WTC11 (cell line): ENCODE measurements at regions of chr19 and their contacts with region 1.

Region 1: GRCh38 chr19:40603389-40604135 is 2.4 kb downstream of the LTBP4 start:
- DNase-seq: peak; percentile 100
- ATAC-seq: peak; percentile 79
- H3K4me3 Mint-ChIP-seq: peak overlapping the region; percentile 77
- H3K27ac Mint-ChIP-seq: peak overlapping the region; percentile 78
- H3K4me1 Mint-ChIP-seq: peaks cover 52% of the 10 kb centered on the region
- H3K27me3 Mint-ChIP-seq: peaks cover 90% of the 10 kb centered on the region
- CTCF ChIP-seq: no peak

Region 2: DNA sequence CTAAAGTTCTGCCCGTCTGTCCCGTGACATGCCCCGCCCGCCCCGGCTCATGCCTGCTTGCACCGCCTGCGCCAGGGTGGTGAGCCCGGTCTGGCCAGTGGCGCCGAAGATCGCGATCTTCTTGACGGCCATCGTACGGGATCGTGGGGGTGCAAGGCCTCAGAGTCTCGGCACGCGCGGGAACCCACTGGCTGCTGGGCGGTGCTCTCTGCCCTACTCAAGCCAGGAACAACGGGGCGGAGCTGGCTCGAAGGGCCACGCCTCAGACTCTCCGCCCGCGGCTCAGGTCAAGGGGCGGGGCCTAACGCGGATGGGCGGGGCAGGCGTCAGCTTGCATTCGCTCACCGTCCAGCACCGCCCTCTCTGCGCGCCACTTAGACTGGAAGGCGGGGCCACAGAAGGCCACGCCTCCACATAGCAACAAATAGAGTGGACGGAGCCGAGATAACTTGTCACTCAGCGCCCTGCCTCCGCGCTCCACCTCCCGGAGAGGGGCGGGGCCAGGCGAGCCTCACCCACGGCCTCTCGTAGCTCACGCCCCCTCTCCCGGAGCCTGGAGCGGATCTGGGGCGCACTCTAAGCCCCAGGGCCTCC is 137.9 kb before region 1 on chr19 and contains the start of gene BLVRB:
- CTCF ChIA-PET with region 1: interaction called, 35 read pairs
- POLR2A ChIA-PET with region 1: no interaction called
- DNase-seq: peak; percentile 100
- ATAC-seq: peak; percentile 92
- H3K4me3 Mint-ChIP-seq: peak within 1 kb of the TSS; percentile 79
- H3K27ac Mint-ChIP-seq: peak within 1 kb of the TSS; percentile 78
- H3K4me1 Mint-ChIP-seq: peaks cover 16% of the 10 kb centered on the region
- H3K27me3 Mint-ChIP-seq: peaks cover 38% of the 10 kb centered on the region
- CTCF ChIP-seq: no peak
- total RNA-seq, gene BLVRB: 35.1 to 38.5 TPM (median 37.1 TPM) in 3 replicates

Region 3: GRCh38 chr19:40523322-40524047 is 80.1 kb before region 1 on chr19:
- CTCF ChIA-PET with region 1: interaction called, 25 read pairs
- POLR2A ChIA-PET with region 1: no interaction called
- DNase-seq: peak; percentile 87
- ATAC-seq: peak; percentile 91
- H3K4me3 Mint-ChIP-seq: no peak overlapping the region
- H3K27ac Mint-ChIP-seq: no peak overlapping the region
- H3K4me1 Mint-ChIP-seq: peaks cover 6% of the 10 kb centered on the region
- H3K27me3 Mint-ChIP-seq: peaks cover 65% of the 10 kb centered on the region
- CTCF ChIP-seq: peak; percentile 75

Region 4: GRCh38 chr19:40542202-40542859 is 61.2 kb before region 1 on chr19:
- CTCF ChIA-PET with region 1: interaction called, 43 read pairs
- POLR2A ChIA-PET with region 1: no interaction called
- DNase-seq: no peak
- ATAC-seq: no peak
- H3K4me3 Mint-ChIP-seq: no peak overlapping the region
- H3K27ac Mint-ChIP-seq: no peak overlapping the region
- H3K4me1 Mint-ChIP-seq: no peaks in the 10 kb centered on the region
- H3K27me3 Mint-ChIP-seq: peaks cover 31% of the 10 kb centered on the region
- CTCF ChIP-seq: no peak

Region 5: GRCh38 chr19:40553885-40554857 is 49.4 kb before region 1 on chr19:
- CTCF ChIA-PET with region 1: interaction called, 71 read pairs
- POLR2A ChIA-PET with region 1: interaction called, 4 read pairs
- DNase-seq: peak; percentile 72
- ATAC-seq: peak; percentile 86
- H3K4me3 Mint-ChIP-seq: peak overlapping the region; percentile 60
- H3K27ac Mint-ChIP-seq: no peak overlapping the region
- H3K4me1 Mint-ChIP-seq: peaks cover 13% of the 10 kb centered on the region
- H3K27me3 Mint-ChIP-seq: peaks cover 91% of the 10 kb centered on the region
- CTCF ChIP-seq: no peak

Region 6: GRCh38 chr19:40576585-40577451 is 26.7 kb before region 1 on chr19 and contains the start of gene SHKBP1:
- CTCF ChIA-PET with region 1: interaction called, 69 read pairs
- POLR2A ChIA-PET with region 1: interaction called, 3 read pairs
- DNase-seq: peak; percentile 96
- ATAC-seq: peak; percentile 89
- H3K4me3 Mint-ChIP-seq: peak within 1 kb of the TSS; percentile 93
- H3K27ac Mint-ChIP-seq: peak within 1 kb of the TSS; percentile 91
- H3K4me1 Mint-ChIP-seq: peaks cover 17% of the 10 kb centered on the region
- H3K27me3 Mint-ChIP-seq: peaks cover 21% of the 10 kb centered on the region
- CTCF ChIP-seq: no peak
- total RNA-seq, gene SHKBP1: 71.7 to 82.1 TPM (median 76.9 TPM) in 3 replicates

Region 7: GRCh38 chr19:40633207-40633606 is 29.6 kb after region 1 on chr19:
- CTCF ChIA-PET with region 1: interaction called, 101 read pairs
- POLR2A ChIA-PET with region 1: interaction called, 6 read pairs
- DNase-seq: no peak
- ATAC-seq: no peak
- H3K4me3 Mint-ChIP-seq: peak overlapping the region; percentile 32; the same call in 1 of the 2 replicates
- H3K27ac Mint-ChIP-seq: no peak overlapping the region
- H3K4me1 Mint-ChIP-seq: peaks cover 44% of the 10 kb centered on the region
- H3K27me3 Mint-ChIP-seq: peaks cover 51% of the 10 kb centered on the region
- CTCF ChIP-seq: no peak

Region 8: GRCh38 chr19:40650749-40651305 is 47.3 kb after region 1 on chr19:
- CTCF ChIA-PET with region 1: no interaction called
- POLR2A ChIA-PET with region 1: no interaction called
- DNase-seq: no peak
- ATAC-seq: no peak
- H3K4me3 Mint-ChIP-seq: no peak overlapping the region
- H3K27ac Mint-ChIP-seq: no peak overlapping the region
- H3K4me1 Mint-ChIP-seq: no peaks in the 10 kb centered on the region
- H3K27me3 Mint-ChIP-seq: peaks cover 12% of the 10 kb centered on the region
- CTCF ChIP-seq: no peak

Region 9: DNA sequence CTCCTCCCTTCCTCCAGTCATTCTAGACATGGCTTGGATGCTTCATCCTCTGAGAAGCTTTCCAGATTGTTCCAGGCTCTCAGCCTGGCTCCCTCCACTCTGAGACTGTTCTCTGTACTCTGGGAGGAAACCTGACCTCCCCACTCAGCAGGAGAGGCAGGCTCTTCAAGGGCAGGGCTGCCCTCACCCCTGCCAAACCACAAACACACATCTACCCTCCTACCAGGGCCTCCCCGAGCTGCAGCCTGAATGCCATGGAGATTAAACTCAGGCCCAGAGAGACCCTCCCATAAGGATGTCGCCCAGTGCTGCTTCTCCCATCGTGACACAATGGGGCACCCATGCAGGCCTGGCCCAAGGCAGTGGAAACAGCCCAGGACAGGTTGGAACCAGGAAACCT is 70.7 kb after region 1 on chr19:
- CTCF ChIA-PET with region 1: no interaction called
- POLR2A ChIA-PET with region 1: no interaction called
- DNase-seq: no peak
- ATAC-seq: no peak
- H3K4me3 Mint-ChIP-seq: no peak overlapping the region
- H3K27ac Mint-ChIP-seq: no peak overlapping the region
- H3K4me1 Mint-ChIP-seq: no peaks in the 10 kb centered on the region
- H3K27me3 Mint-ChIP-seq: no peaks in the 10 kb centered on the region
- CTCF ChIP-seq: no peak